ENCODE measurements at regions of chr4 and their contacts with region 1.

Region 1: GRCh38 chr4:157992038-157992705 is 180.7 kb downstream of the GASK1B start:
- DNase-seq: peak in 1 of 2 donors; percentile 13
- H3K4me3 ChIP-seq: peak overlapping the region in 1 of 3 donors; percentile 13
- H3K27ac ChIP-seq: peak overlapping the region in 2 of 3 donors; percentile 30 to 50
- H3K4me1 ChIP-seq: no peaks in the 10 kb centered on the region
- H3K27me3 ChIP-seq: no peaks in the 10 kb centered on the region
- CTCF ChIP-seq: peak; percentile 38 to 73 (median 64)
- POLR2A ChIP-seq: no peak

Region 2: DNA sequence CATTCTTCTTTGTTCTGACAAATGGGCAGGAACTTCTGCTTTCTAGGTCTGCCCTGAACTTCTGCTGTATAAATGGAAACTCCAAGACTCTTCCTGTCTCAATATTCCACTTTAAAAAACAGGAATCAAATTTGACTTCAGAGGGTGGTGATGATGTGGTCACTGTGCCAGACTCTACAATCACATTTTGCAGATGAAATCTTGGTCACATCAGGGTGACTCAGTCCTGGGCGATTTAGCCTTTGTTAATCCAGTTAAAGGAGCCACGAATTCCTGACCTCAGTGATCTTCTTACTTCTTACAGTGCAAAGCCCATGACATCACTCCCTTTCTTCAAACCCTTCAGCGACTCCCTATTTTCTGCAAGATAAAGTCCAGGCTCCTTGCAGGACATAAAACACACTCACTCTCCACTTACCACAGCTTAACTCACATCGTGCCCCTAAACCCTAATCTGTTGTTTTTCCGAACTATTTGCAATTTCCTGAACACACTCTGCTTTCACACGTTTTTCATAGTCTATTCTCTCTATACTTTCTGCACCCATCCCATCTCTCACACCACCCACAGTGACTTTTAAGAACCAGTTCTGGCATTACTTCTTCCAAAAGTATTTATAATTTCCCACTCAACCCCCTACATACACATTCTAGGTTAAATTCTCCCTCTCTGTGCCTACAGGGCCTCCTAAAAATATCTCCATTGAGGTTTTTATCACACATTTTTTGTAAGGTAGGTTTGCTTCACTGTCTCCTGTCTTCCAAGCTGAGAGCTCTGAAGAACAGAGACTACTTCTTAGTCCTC is 169.6 kb after region 1 on chr4:
- intact Hi-C with region 1: loop called (anchors 10 kb)
- DNase-seq: no peak
- H3K4me3 ChIP-seq: no peak overlapping the region
- H3K27ac ChIP-seq: peak overlapping the region in 2 of 3 donors; percentile 4 to 29
- H3K4me1 ChIP-seq: no peaks in the 10 kb centered on the region
- H3K27me3 ChIP-seq: no peaks in the 10 kb centered on the region
- CTCF ChIP-seq: no peak
- POLR2A ChIP-seq: no peak

Measured in thyroid gland (tissue), 4 donors.